ENCODE measurements at regions of chr12 and their contacts with region 1.

Region 1: GRCh38 chr12:68223083-68223747 is 2.4 kb downstream of the IL26 start:
- DNase-seq: peak; percentile 89
- ATAC-seq: peak; percentile 97
- H3K4me3 ChIP-seq: peak overlapping the region; percentile 17; the same call in 1 of the 2 replicates
- H3K27ac ChIP-seq: no peak overlapping the region
- H3K4me1 ChIP-seq: peaks cover 2% of the 10 kb centered on the region; the same call in 1 of the 2 replicates
- H3K27me3 ChIP-seq: no peaks in the 10 kb centered on the region
- CTCF ChIP-seq: peak; percentile 95
- POLR2A ChIP-seq: 0 out of 2 replicates have a peak, but pooled peaks have one; percentile 46
- RAD21 ChIP-seq: peak; percentile 99

Region 2: DNA sequence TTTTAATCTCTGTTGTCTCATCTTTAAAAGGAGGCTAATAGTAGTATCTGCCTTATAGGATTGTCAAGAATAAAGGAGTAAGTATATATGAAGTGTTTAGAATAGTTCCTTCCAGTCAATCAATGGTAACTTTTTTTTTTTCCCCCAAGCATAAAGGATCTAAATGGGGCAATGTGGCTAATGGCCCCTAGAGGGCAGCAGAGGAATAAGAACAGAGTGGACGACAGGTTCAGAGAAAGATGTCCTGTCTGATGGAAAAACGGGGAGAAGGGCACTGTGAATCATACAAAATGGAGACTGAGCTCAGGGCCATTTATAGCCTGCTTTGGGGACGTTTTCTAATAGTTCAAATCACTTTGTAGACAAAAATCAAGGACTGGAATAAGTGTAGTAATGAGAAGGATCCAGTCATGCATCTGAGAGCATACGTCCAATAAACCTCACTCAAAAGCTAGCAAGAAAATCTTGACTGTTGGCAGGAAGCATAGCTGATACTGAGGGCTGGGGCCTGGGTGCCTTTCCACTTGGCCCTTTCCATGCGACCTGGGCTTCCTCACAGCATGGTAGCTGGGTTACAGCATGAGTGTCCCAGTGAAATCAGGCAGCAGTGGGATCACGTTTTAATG is 182.7 kb before region 1 on chr12:
- CTCF ChIA-PET with region 1: no interaction called
- POLR2A ChIA-PET with region 1: no interaction called
- dilution Hi-C with region 1: no loop called
- in situ Hi-C with region 1: no loop called
- intact Hi-C with region 1: loop called (anchors 1 kb)
- DNase-seq: peak; percentile 73
- ATAC-seq: peak; percentile 95
- H3K4me3 ChIP-seq: no peak overlapping the region
- H3K27ac ChIP-seq: no peak overlapping the region
- H3K4me1 ChIP-seq: no peaks in the 10 kb centered on the region
- H3K27me3 ChIP-seq: no peaks in the 10 kb centered on the region; the same call in 1 of the 2 replicates
- CTCF ChIP-seq: peak; percentile 83
- POLR2A ChIP-seq: no peak
- RAD21 ChIP-seq: peak; percentile 79

Region 3: GRCh38 chr12:68310370-68310769 is 87.2 kb after region 1 on chr12:
- CTCF ChIA-PET with region 1: interaction called, 25 read pairs
- POLR2A ChIA-PET with region 1: no interaction called
- dilution Hi-C with region 1: loop called (anchors 25 kb)
- in situ Hi-C with region 1: loop called (anchors 5 kb)
- intact Hi-C with region 1: no loop called
- DNase-seq: peak; percentile 95
- ATAC-seq: peak; percentile 90
- H3K4me3 ChIP-seq: no peak overlapping the region
- H3K27ac ChIP-seq: no peak overlapping the region
- H3K4me1 ChIP-seq: peaks cover 5% of the 10 kb centered on the region
- H3K27me3 ChIP-seq: no peaks in the 10 kb centered on the region
- CTCF ChIP-seq: no peak
- POLR2A ChIP-seq: no peak
- RAD21 ChIP-seq: no peak

Region 4: DNA sequence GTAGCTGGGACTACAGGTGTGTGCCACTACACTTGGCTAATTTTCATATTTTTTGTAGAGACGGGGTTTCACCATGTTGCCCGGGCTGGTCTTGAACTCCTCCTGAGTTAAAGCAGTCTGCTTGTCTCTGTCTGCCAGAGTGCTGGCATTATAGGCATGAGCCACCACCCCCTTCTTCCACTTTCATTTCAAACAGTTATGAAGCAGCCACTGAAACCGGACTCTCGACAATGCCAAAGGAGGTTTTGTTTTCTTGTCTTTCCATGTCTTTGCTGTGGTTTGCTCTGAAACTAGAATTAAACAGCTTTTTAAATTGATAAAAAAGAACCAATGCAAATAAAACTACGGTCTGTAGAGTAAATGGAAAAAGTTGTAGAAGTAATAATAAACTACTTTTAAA is 417.9 kb after region 1 on chr12:
- CTCF ChIA-PET with region 1: no interaction called
- POLR2A ChIA-PET with region 1: no interaction called
- dilution Hi-C with region 1: no loop called
- in situ Hi-C with region 1: no loop called
- intact Hi-C with region 1: loop called (anchors 10 kb)
- DNase-seq: no peak
- ATAC-seq: 0 out of 2 replicates have a peak, but pooled peaks have one; percentile 30
- H3K4me3 ChIP-seq: no peak overlapping the region
- H3K27ac ChIP-seq: no peak overlapping the region
- H3K4me1 ChIP-seq: peaks cover 11% of the 10 kb centered on the region
- H3K27me3 ChIP-seq: no peaks in the 10 kb centered on the region
- CTCF ChIP-seq: no peak
- POLR2A ChIP-seq: no peak
- RAD21 ChIP-seq: no peak

Measured in IMR-90 (cell line).